Activated naive CD4-positive, alpha-beta T cell treated with anti-CD3 and anti-CD28 coated beads, Interleukin-2, amount 10 ng/mL, durations not matched to agents 7 days and 5 days (primary cell): ENCODE measurements at regions of chr12 and their contacts with region 1.

Region 1: GRCh38 chr12:68119724-68120211 is 39.8 kb downstream of the IFNG start:
- DNase-seq: peak; percentile 58
- H3K4me3 Mint-ChIP-seq: no peak overlapping the region
- H3K27ac Mint-ChIP-seq: peak overlapping the region; percentile 77
- H3K4me1 Mint-ChIP-seq: peaks cover 24% of the 10 kb centered on the region
- H3K27me3 Mint-ChIP-seq: no peaks in the 10 kb centered on the region

Region 2: DNA sequence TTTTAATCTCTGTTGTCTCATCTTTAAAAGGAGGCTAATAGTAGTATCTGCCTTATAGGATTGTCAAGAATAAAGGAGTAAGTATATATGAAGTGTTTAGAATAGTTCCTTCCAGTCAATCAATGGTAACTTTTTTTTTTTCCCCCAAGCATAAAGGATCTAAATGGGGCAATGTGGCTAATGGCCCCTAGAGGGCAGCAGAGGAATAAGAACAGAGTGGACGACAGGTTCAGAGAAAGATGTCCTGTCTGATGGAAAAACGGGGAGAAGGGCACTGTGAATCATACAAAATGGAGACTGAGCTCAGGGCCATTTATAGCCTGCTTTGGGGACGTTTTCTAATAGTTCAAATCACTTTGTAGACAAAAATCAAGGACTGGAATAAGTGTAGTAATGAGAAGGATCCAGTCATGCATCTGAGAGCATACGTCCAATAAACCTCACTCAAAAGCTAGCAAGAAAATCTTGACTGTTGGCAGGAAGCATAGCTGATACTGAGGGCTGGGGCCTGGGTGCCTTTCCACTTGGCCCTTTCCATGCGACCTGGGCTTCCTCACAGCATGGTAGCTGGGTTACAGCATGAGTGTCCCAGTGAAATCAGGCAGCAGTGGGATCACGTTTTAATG is 79.2 kb before region 1 on chr12:
- CTCF ChIA-PET with region 1: interaction called, 17 read pairs
- DNase-seq: peak; percentile 74
- H3K4me3 Mint-ChIP-seq: no peak overlapping the region
- H3K27ac Mint-ChIP-seq: no peak overlapping the region
- H3K4me1 Mint-ChIP-seq: peaks cover 21% of the 10 kb centered on the region
- H3K27me3 Mint-ChIP-seq: no peaks in the 10 kb centered on the region